ENCODE measurements at regions of chr2 and their contacts with region 1.

Region 1: DNA sequence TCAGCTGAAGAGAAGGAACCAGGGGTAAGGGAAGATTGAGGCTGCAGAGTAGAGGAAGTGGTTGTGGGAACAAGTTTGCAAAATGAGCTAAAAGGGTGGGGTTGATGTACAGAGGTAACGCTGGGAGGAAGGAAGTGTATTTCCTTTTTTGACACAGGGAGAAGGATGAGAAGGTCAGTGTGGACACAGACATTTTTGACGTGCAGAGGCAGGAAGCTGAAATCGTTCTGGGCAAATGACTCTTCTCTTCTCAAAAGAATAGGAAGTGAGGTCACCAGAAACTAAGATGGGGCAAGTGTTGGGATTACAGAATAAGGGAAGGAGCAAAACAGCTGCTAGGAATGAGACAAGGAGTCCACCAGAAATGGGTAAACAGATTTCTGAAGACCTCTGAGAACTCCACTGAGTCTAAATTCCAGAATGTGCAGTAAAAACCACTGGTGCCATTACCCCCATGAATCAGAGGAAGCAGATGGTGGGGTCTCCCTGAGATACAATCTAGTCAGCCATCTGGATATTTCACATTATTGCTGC is 20.0 kb upstream of the RNF149 start:
- DNase-seq: peak; percentile 92 to 97 (median 97)
- H3K4me3 ChIP-seq: peak overlapping the region in 1 of 3 experiments; percentile 63
- H3K4me3 Mint-ChIP-seq: no peak overlapping the region
- H3K27ac ChIP-seq: peak overlapping the region; percentile 48 to 84
- H3K27ac Mint-ChIP-seq: no peak overlapping the region
- H3K4me1 ChIP-seq: peaks cover 52 to 62% of the 10 kb centered on the region in 2 donors
- H3K4me1 Mint-ChIP-seq: peaks cover 14% of the 10 kb centered on the region
- H3K27me3 ChIP-seq: no peaks in the 10 kb centered on the region
- H3K27me3 Mint-ChIP-seq: peaks cover 0 to 2% (median 2%) of the 10 kb centered on the region in 3 donors
- CTCF ChIP-seq: no peak

Region 2: GRCh38 chr2:100437751-100438150 is 890.8 kb before region 1 on chr2:
- intact Hi-C with region 1: no loop called
- DNase-seq: no peak
- H3K4me3 ChIP-seq: no peak overlapping the region
- H3K4me3 Mint-ChIP-seq: no peak overlapping the region
- H3K27ac ChIP-seq: no peak overlapping the region
- H3K27ac Mint-ChIP-seq: no peak overlapping the region
- H3K4me1 ChIP-seq: no peaks in the 10 kb centered on the region
- H3K4me1 Mint-ChIP-seq: no peaks in the 10 kb centered on the region
- H3K27me3 ChIP-seq: peaks cover 0 to 4% of the 10 kb centered on the region in 2 donors
- H3K27me3 Mint-ChIP-seq: peaks cover 3 to 10% (median 8%) of the 10 kb centered on the region in 3 donors
- CTCF ChIP-seq: no peak

Region 3: DNA sequence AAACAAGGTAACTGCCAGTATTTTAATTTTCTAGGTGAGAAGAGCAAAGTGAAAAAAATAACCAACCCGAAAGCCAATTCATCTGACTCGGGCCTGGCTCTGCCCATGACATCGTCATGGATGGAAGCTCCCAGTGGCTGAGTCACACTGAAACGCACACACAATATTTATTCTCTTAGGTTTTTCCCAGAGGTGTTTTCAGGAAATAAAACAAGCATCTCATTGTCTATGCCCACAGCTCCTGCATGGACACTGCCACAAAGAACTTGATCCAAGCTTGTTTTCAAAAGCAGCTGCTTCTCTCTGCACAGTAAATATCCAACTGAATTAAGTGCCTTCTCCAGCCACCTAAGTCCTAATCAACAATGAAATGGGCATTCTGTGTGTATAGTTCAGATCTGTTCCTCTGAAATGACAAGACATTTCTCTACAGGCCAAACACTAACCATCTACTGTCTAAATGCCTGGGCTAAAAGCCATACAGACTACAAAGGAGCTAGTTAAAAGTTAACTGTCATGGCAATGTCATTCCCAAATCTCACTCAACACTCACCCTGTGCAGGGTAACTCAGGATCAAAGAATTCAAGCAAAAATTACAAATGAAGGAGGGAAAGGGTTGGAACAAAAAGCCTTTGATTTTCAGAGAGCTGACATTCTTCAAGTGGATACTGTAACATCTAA is 263.5 kb before region 1 on chr2:
- intact Hi-C with region 1: no loop called
- DNase-seq: no peak
- H3K4me3 ChIP-seq: no peak overlapping the region
- H3K4me3 Mint-ChIP-seq: no peak overlapping the region
- H3K27ac ChIP-seq: no peak overlapping the region
- H3K27ac Mint-ChIP-seq: no peak overlapping the region
- H3K4me1 ChIP-seq: no peaks in the 10 kb centered on the region
- H3K4me1 Mint-ChIP-seq: peaks cover 5% of the 10 kb centered on the region
- H3K27me3 ChIP-seq: no peaks in the 10 kb centered on the region
- H3K27me3 Mint-ChIP-seq: peaks cover 0 to 2% (median 0%) of the 10 kb centered on the region in 3 donors
- CTCF ChIP-seq: no peak

Region 4: GRCh38 chr2:101308432-101309210 is 19.9 kb before region 1 on chr2 and contains the start of gene RNF149:
- intact Hi-C with region 1: loop called in 1 of 2 experiments (anchors 2 kb)
- DNase-seq: peak; percentile 99
- H3K4me3 ChIP-seq: peak within 1 kb of the TSS; percentile 91 to 98 (median 98)
- H3K4me3 Mint-ChIP-seq: peak within 1 kb of the TSS; percentile 94 to 98
- H3K27ac ChIP-seq: peak within 1 kb of the TSS; percentile 94 to 96
- H3K27ac Mint-ChIP-seq: peak within 1 kb of the TSS; percentile 92 to 99 (median 95)
- H3K4me1 ChIP-seq: peaks cover 64 to 68% of the 10 kb centered on the region in 2 donors
- H3K4me1 Mint-ChIP-seq: peaks cover 69% of the 10 kb centered on the region
- H3K27me3 ChIP-seq: no peaks in the 10 kb centered on the region
- H3K27me3 Mint-ChIP-seq: peaks cover 0 to 3% (median 0%) of the 10 kb centered on the region in 3 donors
- CTCF ChIP-seq: no peak
- polyA plus RNA-seq, gene RNF149: 112 to 148 (median 141) TPM

Measured in CD14-positive monocyte (primary cell).